ENCODE measurements at regions of chr21 and their contacts with region 1.

Region 1: GRCh38 chr21:15592271-15592860 is 137.4 kb upstream of the USP25 start:
- DNase-seq: no peak

Region 2: DNA sequence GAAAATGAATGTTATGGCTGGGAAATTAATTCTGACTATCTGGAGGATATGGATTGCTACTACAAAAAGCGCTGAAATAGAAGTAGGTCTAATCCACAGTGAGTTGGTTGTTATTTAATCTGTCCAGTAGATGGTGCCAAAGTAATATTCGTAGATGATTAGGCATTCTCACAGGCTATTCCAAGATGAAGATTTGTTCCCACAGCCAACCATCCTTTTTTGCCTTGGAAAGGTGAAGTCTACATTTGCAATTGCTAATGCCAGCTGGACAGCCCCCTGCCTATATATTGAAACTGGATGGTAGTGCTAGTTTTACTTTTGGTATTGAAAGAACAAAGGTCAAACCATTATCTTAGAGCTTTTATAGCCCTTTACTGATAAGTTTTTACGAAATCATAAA is 1332.6 kb before region 1 on chr21:
- intact Hi-C with region 1: loop called (anchors 10 kb)
- DNase-seq: no peak

Region 3: DNA sequence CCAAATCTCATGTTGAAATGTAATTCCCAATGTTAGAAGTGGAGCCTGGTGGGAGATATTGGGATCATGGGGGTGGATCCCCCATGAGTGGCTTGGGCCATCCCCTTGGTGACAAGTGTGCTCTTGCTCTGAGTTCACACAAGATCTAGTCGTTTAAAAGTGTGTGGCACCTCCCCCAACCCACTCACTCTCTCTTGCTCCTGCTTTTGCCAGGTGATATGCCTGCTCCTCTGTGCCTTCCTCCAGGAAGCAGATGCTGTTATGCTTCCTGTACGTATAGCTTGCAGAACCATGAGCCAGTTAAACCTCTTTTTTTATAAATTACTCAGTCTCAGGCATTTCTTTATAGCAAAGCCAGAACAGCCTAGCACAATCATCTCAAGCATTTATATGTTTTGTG is 1186.4 kb before region 1 on chr21:
- intact Hi-C with region 1: loop called (anchors 5 kb)
- DNase-seq: no peak

Region 4: GRCh38 chr21:14977814-14978213 is 614.6 kb before region 1 on chr21:
- intact Hi-C with region 1: no loop called
- DNase-seq: no peak

Region 5: GRCh38 chr21:15472108-15473040 is 120.0 kb before region 1 on chr21:
- intact Hi-C with region 1: no loop called
- DNase-seq: no peak

Region 6: GRCh38 chr21:15797577-15798363 is 205.4 kb after region 1 on chr21:
- intact Hi-C with region 1: no loop called
- DNase-seq: no peak